GM10248 (cell line): ENCODE measurements at regions of chr12 and their contacts with region 1.

Region 1: DNA sequence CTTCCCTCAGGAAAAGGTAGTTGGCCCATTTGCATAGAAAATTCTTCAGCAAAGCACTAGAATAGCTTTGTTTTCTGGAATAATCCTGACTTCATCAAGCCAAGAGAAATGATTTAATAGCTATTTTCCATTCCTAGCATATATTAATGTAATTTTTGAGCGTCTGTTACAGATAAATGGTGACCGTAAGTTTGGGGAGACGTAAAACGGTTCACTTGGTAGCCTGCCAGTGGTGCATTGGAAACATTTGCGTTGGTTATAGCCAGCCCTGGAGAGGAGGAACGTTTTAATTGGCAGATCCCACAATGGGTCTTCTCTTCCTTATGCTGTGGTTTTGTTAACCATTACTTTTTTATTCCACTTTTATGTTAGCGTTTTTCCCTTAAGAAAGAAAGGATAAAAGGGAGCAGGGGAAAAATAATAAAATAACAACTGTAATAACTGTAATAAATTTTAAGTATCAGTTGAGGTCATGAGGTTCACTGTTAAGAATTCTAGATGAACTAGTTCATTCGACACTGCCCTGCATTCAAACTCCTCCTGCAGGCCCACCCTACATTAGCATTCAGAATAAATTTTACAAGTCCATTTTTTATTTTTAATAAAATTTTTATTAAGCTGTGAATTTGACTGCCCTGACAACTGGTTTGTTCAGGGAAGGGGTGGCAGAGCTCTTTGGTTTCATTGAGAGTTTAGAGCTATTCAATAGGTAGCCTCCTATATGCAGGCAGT is 300.7 kb downstream of the ERC1 start:
- DNase-seq: no peak
- CTCF ChIP-seq: no peak

Region 2: GRCh38 chr12:1302201-1302870 is 10.6 kb after region 1 on chr12:
- CTCF ChIA-PET with region 1: interaction called, 11 read pairs
- POLR2A ChIA-PET with region 1: no interaction called
- DNase-seq: no peak
- CTCF ChIP-seq: no peak

Region 3: GRCh38 chr12:2013527-2014223 is 721.9 kb after region 1 on chr12:
- CTCF ChIA-PET with region 1: no interaction called
- POLR2A ChIA-PET with region 1: no interaction called
- DNase-seq: no peak
- CTCF ChIP-seq: no peak